Activated T-helper 1 cell treated with anti-CD3 and anti-CD28 coated beads, Interleukin-12 subunit alpha, Interleukin-12 subunit beta, Interleukin-2, Interleukin-4 antibody, amounts not matched to agents 30 ng/mL and 10 ng/mL and 1 ng/mL, durations not matched to agents 14 hours and 24 hours and 36 hours (primary cell): ENCODE measurements at regions of chr1 and their contacts with region 1.

Region 1: DNA sequence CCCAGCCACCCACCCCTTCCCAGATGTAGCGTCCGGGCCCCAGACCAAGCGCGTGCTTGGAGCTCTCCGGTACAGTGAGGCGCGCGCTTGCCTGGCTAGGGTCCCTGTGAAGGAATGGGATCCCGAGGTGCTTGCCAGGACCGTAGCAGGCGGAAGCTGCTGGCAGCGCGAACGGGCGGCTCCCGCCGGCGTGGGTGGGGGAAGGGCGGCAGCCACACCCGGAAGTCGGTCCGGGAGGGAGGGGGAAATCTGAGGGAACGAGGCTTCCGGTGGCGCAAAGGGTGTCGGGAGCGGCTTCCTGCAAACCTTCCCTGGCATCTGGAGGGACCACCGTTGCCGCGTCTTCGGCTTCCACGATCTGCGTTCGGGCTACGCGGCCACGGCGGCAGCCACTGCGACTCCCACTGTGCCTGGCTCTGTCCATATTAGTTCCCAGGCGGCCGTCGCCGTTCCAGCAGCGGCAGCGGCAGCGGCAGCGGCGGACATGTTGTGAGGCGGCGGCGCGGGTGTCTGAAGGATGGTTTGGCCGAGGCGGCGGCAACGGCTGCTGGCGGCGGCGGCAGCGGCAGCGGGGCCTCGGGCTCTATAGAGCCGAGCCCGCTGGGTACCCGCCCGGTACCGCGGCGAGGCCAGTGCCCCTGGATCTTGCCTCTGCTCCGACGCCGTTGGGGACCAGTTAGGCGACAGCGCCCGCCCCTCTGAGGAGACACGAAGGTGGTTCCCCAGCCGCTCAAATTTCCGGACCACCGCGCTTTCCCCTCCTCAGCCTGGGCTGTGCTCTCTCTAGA is at the start of gene DR1:
- DNase-seq: peak; percentile 90
- H3K4me3 Mint-ChIP-seq: peak within 1 kb of the TSS; percentile 100
- H3K27ac Mint-ChIP-seq: peak within 1 kb of the TSS; percentile 99
- H3K4me1 Mint-ChIP-seq: peaks cover 36% of the 10 kb centered on the region
- H3K27me3 Mint-ChIP-seq: no peaks in the 10 kb centered on the region
- total RNA-seq, gene DR1: 101 and 106 TPM in 2 replicates

Region 2: GRCh38 chr1:93021539-93022134 is 324.2 kb before region 1 on chr1:
- intact Hi-C with region 1: loop called (anchors 5 kb)
- DNase-seq: no peak
- H3K4me3 Mint-ChIP-seq: no peak overlapping the region
- H3K27ac Mint-ChIP-seq: no peak overlapping the region
- H3K4me1 Mint-ChIP-seq: peaks cover 6% of the 10 kb centered on the region
- H3K27me3 Mint-ChIP-seq: peaks cover 36% of the 10 kb centered on the region

Region 3: DNA sequence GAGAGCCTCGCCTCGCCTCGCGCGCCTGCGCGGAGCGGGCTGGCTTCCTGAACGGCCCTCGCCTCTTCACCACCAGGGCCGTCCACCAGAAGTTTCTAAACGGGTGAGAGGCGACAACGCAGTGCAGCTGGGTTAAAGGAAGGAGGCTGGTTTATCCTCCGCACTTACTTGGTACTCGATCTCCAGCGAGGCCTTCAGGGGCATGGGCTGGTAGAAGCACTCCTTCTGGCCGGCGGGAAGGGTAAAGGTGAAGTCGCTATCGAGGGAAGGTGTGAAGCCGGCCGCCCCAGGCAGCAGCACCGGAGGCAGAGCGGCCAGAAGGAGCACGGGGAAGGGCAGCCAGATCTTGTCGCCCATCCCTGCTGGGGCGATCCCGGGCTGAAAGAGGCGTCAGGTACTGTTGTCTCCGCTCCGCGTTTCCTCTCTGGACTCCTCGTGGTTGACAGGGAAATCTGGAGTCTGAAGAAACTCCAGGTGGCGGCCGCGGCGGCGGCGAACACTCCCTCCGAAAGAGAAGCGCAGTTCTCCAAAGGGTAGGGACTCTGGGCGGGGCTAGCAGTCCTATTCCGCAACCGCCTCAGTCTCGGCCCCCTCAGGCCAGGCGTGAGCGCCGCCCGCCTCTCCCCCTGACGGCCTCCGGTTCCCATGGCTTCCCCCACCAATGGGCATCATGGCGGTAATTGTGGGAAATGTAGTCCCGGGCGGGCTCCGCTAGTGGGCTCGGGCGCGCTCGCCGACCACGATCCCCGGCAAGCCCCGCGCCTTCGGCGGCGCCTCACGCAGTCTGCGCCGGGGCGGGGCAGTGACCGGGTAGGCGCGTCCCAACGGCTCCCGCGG is 165.7 kb before region 1 on chr1 and contains the start of gene TMED5:
- intact Hi-C with region 1: loop called (anchors 1 kb)
- DNase-seq: peak; percentile 98
- H3K4me3 Mint-ChIP-seq: peak within 1 kb of the TSS; percentile 93
- H3K27ac Mint-ChIP-seq: peak within 1 kb of the TSS; percentile 96
- H3K4me1 Mint-ChIP-seq: peaks cover 57% of the 10 kb centered on the region
- H3K27me3 Mint-ChIP-seq: no peaks in the 10 kb centered on the region
- total RNA-seq, gene TMED5: 46.7 and 48.7 TPM in 2 replicates

Region 4: DNA sequence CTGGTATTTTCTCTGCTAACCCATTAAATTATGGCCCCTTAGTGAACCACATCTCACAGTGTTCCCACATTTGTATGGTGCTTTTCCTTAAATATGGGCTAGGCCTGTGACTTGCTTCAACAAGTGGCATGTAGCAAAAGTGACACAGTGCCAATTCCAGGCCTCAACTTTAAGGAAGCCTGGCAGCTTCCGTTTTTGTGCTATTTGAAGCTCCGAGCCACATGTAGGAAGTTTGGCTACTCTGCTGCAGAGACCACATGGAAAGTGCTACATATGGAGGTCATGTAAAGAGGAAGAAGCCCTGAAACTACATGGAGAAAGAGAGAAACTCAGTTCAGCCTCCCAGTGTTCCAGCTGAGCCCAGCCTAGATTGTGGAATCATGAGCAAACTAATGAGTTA is 28.6 kb before region 1 on chr1:
- intact Hi-C with region 1: no loop called
- DNase-seq: no peak
- H3K4me3 Mint-ChIP-seq: no peak overlapping the region
- H3K27ac Mint-ChIP-seq: no peak overlapping the region
- H3K4me1 Mint-ChIP-seq: no peaks in the 10 kb centered on the region
- H3K27me3 Mint-ChIP-seq: no peaks in the 10 kb centered on the region

Region 5: GRCh38 chr1:93360111-93360510 is 14.3 kb after region 1 on chr1:
- intact Hi-C with region 1: loop called (anchors 2 kb)
- DNase-seq: no peak
- H3K4me3 Mint-ChIP-seq: no peak overlapping the region
- H3K27ac Mint-ChIP-seq: no peak overlapping the region
- H3K4me1 Mint-ChIP-seq: peaks cover 67% of the 10 kb centered on the region
- H3K27me3 Mint-ChIP-seq: no peaks in the 10 kb centered on the region

Region 6: DNA sequence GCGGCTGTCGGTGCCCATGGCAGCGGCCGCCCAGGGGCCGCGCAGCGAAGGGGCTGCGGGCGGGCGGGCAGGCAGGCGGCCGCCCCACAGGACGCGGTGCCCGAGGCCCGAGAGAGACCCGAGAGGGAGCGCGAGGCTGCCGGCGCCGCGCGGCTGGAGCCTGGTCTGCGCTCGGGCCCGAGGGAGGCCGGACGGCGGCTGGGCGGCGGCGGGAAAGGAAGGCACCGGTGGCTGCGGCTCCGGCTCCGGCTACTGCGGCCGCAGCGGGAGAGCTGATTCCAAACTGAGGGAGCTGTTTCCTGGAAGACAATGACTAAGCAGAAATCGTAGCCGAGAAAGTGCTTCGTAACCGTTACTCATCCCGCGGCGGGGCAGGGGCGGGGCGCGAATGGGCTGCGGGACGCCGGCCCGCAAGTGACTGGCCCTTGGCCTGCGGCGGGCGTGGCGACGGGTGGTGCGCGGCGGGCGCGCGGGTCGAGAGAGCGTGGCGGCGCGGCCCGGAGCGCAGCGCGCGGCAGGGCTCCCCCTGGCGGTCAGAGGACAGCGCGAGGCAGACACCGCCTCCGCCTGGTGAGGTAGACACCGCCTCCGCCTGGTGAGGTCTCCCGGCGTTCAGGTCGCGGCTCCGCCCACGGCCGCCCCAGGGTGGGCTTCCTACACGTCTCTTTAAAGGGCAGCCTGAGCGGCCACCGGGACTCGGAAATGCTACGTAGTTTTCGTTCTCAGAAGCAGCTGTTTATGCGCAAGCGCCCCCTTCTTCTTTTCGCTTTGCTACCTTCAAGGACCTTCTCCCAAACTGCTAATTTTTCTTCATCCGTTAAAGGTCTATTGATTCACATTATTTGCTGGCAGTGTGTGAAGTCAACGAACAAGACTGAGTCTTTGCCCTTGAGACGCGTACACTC is 563.6 kb after region 1 on chr1 and contains the start of gene GCLM:
- intact Hi-C with region 1: loop called (anchors 2 kb)
- DNase-seq: peak; percentile 89
- H3K4me3 Mint-ChIP-seq: peak within 1 kb of the TSS; percentile 94
- H3K27ac Mint-ChIP-seq: peak within 1 kb of the TSS; percentile 94
- H3K4me1 Mint-ChIP-seq: peaks cover 40% of the 10 kb centered on the region
- H3K27me3 Mint-ChIP-seq: peaks cover 20% of the 10 kb centered on the region
- total RNA-seq, gene GCLM: 20.2 and 23.8 TPM in 2 replicates